Mammary epithelial cell (primary cell): ENCODE measurements at regions of chr17 and their contacts with region 1.

Region 1: GRCh38 chr17:44199553-44200477 is at the start of gene ATXN7L3:
- DNase-seq: peak; percentile 98
- H3K4me3 ChIP-seq: peak within 1 kb of the TSS; percentile 77 to 86 (median 86)
- H3K27ac ChIP-seq: peak within 1 kb of the TSS; percentile 80
- H3K4me1 ChIP-seq: peaks cover 31% of the 10 kb centered on the region
- H3K27me3 ChIP-seq: no peaks in the 10 kb centered on the region
- CTCF ChIP-seq: no peak
- total RNA-seq, gene ATXN7L3: 35.3 to 55.9 TPM

Region 2: DNA sequence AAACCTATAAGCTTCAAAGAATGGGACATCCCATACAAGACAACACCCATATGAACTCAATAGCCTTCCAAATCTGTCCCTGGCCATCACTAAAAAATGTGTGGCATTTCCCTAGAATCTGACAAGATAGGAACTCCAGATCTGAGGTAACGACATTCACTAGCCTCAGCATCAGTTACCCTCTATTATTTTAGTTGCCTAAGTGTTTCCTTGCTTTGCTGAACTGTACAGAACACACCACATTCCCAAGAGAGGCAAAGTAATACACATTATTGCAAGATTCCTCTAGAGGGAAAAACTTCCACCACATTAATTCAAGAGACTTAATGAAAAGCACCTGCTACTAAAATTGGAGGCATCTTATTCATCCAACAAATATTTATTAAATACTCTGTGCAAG is 138.4 kb before region 1 on chr17:
- CTCF ChIA-PET with region 1: interaction called, 12 read pairs
- dilution Hi-C with region 1: no loop called
- in situ Hi-C with region 1: no loop called
- intact Hi-C with region 1: no loop called
- DNase-seq: no peak
- H3K4me3 ChIP-seq: no peak overlapping the region
- H3K27ac ChIP-seq: no peak overlapping the region
- H3K4me1 ChIP-seq: peaks cover 5% of the 10 kb centered on the region
- H3K27me3 ChIP-seq: no peaks in the 10 kb centered on the region
- CTCF ChIP-seq: no peak

Region 3: DNA sequence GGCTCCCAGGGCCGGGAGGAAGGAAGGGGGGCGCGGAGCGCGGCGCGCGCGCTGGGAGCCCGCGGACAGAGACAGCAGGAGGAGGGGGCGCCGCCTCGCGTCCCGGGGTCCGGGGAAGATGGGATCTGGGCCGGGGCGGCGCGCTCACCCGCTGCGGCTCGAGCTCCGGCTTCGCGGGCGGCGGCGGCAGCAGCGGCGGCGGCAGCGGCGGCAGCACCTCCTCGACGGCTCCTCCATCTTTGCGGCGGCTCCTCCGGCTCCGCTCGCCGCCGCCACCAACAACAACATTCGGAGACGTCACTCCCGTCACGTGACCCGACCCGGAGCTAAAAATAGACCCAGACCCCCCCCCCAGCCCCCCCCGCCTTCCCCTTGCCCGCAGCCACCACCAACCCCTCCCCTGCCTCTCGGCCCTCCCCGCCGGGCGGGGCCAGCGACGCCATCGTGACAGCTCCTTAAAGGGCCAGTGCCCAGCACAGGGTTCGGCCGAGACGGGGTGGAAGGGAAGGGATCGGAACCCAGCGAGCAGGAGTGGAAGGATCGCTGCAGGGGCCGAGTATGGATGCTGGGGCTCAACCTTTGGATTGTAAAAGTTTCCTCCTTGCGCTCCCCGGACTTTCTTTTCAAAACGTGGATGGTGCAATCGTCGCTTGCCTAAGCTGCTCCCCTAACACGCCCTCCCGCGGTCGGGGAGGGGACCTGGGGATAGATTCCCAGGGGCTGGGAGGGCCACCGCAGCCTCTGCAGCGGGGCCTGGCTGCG is 76.3 kb before region 1 on chr17 and contains the start of gene HDAC5:
- CTCF ChIA-PET with region 1: no interaction called
- dilution Hi-C with region 1: no loop called
- in situ Hi-C with region 1: no loop called
- intact Hi-C with region 1: loop called (anchors 10 kb)
- DNase-seq: peak; percentile 89
- H3K4me3 ChIP-seq: peak within 1 kb of the TSS; percentile 62 to 67 (median 65)
- H3K27ac ChIP-seq: peak within 1 kb of the TSS; percentile 90
- H3K4me1 ChIP-seq: peaks cover 18% of the 10 kb centered on the region
- H3K27me3 ChIP-seq: no peaks in the 10 kb centered on the region
- CTCF ChIP-seq: peak; percentile 36 to 75
- total RNA-seq, gene HDAC5: 9.9 to 21.8 TPM

Region 4: DNA sequence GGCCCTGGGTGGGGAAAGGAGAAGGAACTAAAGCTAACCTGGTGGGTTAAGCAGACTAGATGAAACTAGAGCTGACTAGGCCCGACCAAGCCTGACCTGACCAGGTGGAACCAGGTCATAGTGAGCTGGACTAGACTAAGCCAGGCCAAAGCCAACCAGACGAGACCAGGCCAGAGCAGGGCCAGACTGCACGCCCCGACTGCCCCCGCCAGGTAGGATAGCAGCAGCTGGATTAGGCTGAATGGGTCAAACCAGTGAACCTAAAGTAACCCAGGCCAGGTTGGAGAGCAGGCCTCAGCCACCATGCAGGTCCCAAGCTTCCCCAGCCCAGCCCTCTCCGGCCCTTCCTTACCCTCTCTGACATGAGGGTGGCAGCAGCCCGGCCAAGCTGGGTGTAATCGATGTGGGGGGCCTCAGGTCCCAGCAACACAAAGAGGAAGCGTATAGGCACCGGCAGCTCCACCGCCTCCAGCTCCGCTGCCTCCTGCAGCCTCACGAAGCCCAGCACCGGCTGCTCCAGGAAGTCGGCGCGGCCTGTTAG is 59.1 kb after region 1 on chr17:
- CTCF ChIA-PET with region 1: no interaction called
- dilution Hi-C with region 1: no loop called
- in situ Hi-C with region 1: no loop called
- intact Hi-C with region 1: no loop called
- DNase-seq: no peak
- H3K4me3 ChIP-seq: no peak overlapping the region
- H3K27ac ChIP-seq: no peak overlapping the region
- H3K4me1 ChIP-seq: no peaks in the 10 kb centered on the region
- H3K27me3 ChIP-seq: no peaks in the 10 kb centered on the region
- CTCF ChIP-seq: no peak

Region 5: DNA sequence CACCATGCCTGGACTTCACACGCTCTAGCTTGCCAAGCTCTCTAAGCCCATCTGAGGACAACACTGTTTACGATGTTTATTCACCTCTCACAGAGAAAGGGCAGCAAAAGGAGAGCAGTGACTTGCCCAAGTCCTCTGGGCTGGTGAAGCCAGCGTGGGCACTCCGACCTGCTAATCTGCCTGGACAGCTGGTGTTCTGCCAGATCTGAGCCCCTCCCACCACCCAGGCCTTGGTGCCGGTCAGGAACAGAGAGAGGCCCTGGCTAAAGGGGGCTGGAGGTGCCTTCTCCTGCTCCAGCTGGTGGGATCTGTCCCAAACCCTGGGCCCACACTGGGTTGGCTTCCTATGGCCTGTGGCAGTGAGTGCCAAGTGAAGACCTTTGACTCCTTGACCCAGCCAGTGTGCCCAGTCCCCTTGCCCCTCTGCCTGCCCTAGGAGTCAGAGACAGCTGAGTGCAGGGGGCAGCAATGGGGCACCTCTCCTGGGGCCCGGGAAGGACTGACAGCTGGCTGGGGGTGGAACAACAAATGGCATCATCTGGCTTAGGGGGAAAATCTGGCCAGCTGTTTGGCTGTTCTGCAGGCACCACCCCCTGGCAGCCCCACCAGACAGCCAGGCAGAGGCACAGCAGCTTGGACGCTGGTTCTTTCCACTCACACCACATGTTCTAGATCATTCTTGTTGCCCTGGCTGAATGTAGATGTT is 69.9 kb after region 1 on chr17:
- CTCF ChIA-PET with region 1: no interaction called
- dilution Hi-C with region 1: loop called (anchors 5 kb)
- in situ Hi-C with region 1: no loop called
- intact Hi-C with region 1: no loop called
- DNase-seq: no peak
- H3K4me3 ChIP-seq: no peak overlapping the region
- H3K27ac ChIP-seq: no peak overlapping the region
- H3K4me1 ChIP-seq: no peaks in the 10 kb centered on the region
- H3K27me3 ChIP-seq: no peaks in the 10 kb centered on the region
- CTCF ChIP-seq: no peak

Region 6: GRCh38 chr17:44350733-44351226 is 151.0 kb after region 1 on chr17:
- CTCF ChIA-PET with region 1: no interaction called
- dilution Hi-C with region 1: no loop called
- in situ Hi-C with region 1: no loop called
- intact Hi-C with region 1: loop called (anchors 2 kb)
- DNase-seq: peak; percentile 32
- H3K4me3 ChIP-seq: no peak overlapping the region
- H3K27ac ChIP-seq: no peak overlapping the region
- H3K4me1 ChIP-seq: peaks cover 26% of the 10 kb centered on the region
- H3K27me3 ChIP-seq: no peaks in the 10 kb centered on the region
- CTCF ChIP-seq: peak; percentile 71 to 86